Mammary epithelial cell (primary cell): ENCODE measurements at regions of chr10 and their contacts with region 1.

Region 1: GRCh38 chr10:84160663-84161362 is 12.8 kb upstream of the GPR15LG start:
- DNase-seq: no peak
- H3K4me3 ChIP-seq: no peak overlapping the region
- H3K27ac ChIP-seq: no peak overlapping the region
- H3K4me1 ChIP-seq: no peaks in the 10 kb centered on the region
- H3K27me3 ChIP-seq: no peaks in the 10 kb centered on the region
- CTCF ChIP-seq: peak; percentile 11 to 41

Region 2: DNA sequence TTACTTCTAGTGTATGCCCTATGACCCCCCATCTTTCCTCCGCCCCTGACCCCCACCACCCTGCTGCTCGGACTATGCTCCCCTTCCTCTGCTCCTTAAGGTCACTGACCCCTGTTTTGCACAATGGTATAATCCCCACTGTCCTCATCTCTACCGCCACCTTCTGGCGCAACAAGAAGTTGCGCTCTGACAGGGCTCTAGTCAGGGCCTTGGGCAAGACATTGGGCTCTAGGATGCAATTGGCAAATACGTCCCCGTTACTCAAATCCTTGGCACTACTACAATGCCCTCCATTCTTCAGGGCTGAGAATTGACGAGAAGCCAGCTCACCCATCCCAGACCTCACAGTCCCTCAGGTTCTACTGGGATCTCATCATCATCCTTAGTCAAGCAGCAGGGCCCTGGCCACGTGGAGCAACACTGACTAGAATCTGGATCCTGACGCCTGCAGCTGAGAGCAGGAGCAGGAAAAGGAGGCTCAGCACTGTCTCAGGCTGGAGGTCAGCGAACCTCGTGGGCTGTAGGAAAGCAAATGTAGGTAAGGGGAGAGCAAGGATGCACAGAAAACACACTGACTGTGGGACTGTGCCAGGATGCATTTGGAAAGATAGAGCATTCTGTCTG is 53.9 kb after region 1 on chr10:
- CTCF ChIA-PET with region 1: interaction called, 12 read pairs
- dilution Hi-C with region 1: no loop called
- in situ Hi-C with region 1: loop called (anchors 5 kb)
- intact Hi-C with region 1: no loop called
- DNase-seq: peak; percentile 26
- H3K4me3 ChIP-seq: no peak overlapping the region
- H3K27ac ChIP-seq: no peak overlapping the region
- H3K4me1 ChIP-seq: no peaks in the 10 kb centered on the region
- H3K27me3 ChIP-seq: no peaks in the 10 kb centered on the region
- CTCF ChIP-seq: peak; percentile 73 to 82

Region 3: DNA sequence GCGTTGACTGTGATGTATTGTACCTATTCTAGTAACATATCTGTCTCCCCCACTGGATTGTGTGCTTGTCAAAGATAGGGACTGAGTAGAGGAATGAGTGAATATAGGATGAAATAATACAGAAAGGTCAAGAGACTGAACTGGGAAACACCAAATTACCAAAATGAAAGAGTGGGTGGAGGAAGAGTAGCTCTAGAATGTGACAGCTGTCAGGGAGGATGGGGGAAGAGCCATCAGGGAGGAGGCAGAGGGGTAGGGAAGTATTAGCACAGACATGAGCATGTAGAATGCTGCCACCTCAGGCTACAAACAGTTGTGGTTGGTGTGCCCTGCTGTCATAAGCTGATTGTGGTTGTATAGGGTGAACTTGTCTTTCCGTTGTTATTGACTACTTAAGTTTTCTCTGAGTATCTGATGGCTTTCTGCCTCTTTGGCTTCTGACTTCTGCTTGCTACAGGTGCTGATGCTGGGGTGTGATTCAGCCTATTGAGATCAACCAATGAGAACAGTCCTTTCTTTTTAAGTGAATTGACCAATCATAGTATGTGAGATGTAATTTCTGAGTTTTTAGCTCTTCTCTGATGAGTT is 173.1 kb after region 1 on chr10:
- CTCF ChIA-PET with region 1: no interaction called
- dilution Hi-C with region 1: no loop called
- in situ Hi-C with region 1: no loop called
- intact Hi-C with region 1: no loop called
- DNase-seq: peak; percentile 57
- H3K4me3 ChIP-seq: no peak overlapping the region
- H3K27ac ChIP-seq: no peak overlapping the region
- H3K4me1 ChIP-seq: peaks cover 34% of the 10 kb centered on the region
- H3K27me3 ChIP-seq: no peaks in the 10 kb centered on the region
- CTCF ChIP-seq: no peak

Region 4: GRCh38 chr10:84510121-84510520 is 349.3 kb after region 1 on chr10:
- CTCF ChIA-PET with region 1: no interaction called
- dilution Hi-C with region 1: no loop called
- in situ Hi-C with region 1: no loop called
- intact Hi-C with region 1: no loop called
- DNase-seq: peak; percentile 32
- H3K4me3 ChIP-seq: no peak overlapping the region
- H3K27ac ChIP-seq: no peak overlapping the region
- H3K4me1 ChIP-seq: no peaks in the 10 kb centered on the region
- H3K27me3 ChIP-seq: no peaks in the 10 kb centered on the region
- CTCF ChIP-seq: no peak